Posterior vena cava (tissue), 2 donors: ENCODE measurements at regions of chr3 and their contacts with region 1.

Region 1: DNA sequence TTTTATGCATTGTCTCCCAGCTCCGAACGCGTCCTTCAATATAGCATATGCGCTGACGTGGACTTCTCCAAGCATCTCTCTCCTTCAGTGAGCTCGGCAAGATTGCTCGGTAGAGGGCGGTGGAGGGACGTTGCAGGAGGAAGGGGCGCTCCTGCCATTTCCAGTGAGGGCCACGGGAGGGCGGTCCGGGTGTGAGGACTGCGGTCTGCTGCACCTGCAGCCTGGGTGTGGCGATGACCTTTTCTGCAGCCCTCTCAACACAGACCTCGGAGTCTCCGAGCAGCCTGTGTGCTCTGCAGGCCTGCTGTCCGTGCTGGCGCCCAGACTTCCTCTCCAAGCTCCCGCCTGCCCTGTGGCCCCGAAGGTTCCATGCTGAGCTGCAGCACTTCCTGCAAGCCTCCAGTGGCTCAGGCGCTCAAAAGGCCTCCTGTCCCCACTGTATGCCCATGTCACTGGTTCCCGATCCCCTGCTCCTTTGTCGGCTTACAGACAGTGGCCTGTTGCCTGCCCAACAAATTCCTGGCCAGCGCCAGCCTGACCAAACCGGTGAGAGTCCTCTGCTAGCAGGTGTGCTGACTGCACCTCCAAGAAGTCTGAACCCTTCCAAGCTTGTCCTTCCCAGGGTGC is 8.9 kb upstream of the RTP3 start:
- DNase-seq: peak; percentile 96

Region 2: DNA sequence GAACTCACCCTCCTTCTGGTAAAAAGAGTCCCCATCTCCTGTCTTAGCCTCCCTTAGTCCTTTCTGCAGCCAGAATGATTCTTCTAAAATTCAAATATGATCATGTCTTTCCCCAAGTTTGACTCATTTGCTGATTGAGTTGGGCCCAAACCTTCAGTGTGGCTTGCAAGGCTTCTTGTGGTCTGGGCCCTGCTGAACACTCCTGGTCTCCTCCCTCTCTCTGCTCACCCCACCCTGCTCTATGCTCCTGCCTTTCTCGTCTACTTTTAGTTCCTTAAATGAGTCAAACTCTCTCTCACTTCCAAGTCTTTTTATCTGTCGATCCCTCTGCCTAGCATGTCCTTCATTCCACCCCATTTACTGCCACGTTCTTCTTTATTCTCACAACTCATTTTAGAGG is 353.4 kb before region 1 on chr3:
- intact Hi-C with region 1: no loop called
- DNase-seq: no peak

Region 3: DNA sequence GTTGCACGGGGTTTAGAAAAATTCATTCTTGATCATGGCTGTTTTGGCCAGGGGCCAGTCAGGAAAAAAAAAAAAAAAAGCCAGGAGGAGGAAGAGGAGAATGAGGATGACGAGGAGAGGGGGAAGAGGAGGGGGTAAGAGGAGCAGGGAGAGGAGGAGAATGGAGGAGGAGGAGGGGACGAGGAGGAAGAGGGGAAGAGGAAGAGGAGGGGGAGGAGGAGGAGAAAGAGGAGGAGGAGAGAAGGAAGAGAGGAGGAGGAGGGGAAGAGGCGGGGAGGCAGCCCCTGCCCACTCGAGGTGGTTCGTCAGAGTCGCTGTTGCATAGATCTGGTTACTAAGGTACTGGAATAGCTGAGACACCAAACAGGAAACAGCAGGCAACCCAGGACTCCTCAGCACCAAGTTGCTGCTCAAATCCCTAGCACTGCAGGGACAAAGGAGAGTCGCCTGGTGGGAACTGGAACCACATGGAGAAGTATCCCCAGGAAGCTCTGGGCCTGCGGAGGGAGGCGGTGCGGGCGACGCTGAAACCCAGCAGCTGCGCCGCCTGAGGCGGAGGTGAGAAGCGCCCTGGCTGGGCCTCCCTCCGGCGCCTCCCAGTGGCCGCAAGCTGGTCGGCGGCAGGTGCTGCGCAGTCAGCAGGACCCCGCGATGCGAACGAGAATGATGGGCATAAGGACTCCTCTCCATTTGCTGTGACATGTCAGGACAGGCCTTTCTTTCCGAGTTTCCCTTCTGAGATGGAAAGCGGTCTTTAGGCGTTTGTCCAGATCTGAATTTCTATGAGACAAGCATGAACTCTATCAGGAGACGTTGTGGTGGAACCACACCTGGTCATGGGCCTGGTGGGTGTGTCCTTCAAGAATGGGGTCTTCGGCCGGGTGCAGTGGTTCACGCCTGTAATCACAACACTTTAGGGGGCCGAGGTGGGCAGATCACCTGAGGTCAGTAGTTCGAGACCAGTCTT is 141.0 kb after region 1 on chr3:
- intact Hi-C with region 1: loop called (anchors 2 to 5 kb)
- DNase-seq: peak; percentile 94